Right lobe of liver (tissue), 6 donors: ENCODE measurements at regions of chr11 and their contacts with region 1.

Region 1: DNA sequence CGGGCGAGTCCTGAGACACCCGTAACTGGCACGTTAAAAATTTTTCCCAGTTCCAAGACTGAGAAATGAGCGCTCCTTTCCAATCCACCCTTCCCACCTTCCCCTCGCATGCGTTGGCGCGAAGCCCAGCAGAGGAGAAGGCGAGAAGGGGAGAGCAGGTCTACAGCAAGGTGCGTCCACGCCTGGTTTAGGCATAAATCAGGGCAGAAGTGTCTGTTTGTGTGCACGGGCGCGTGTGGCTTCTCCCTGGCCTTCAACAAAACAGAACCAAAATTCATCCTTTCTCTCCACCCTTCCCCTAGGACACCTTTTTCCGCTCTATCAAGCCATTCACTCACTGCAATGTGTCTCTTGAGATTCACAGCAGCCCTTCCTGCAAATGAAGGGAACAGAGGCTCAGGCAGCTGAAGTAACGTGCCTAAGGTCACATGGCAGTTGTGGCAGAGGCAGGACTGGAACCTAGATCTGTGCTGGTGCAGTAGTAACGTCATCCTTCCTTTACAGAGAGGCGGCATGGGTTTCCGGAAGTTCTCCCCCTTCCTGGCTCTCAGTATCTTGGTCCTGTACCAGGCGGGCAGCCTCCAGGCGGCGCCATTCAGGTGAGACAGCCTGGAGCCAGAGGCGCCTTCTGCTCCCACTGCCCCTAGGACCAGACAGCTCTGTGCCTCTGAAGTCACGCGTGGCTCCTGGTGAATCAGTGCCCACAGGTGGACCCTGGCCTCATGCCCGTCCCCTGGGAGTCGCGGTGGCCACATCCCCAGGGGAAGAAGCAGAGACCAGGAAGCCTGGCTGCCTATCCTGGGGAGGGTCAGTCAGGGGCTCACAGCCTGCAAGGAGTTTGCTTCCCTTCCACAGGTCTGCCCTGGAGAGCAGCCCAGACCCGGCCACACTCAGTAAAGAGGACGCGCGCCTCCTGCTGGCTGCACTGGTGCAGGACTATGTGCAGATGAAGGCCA is 1.1 kb downstream of the CALCB start:
- DNase-seq: peak; percentile 90
- ATAC-seq: peak; percentile 94 to 96 (median 96)
- H3K4me3 ChIP-seq: peak overlapping the region in 2 of 3 donors; percentile 9 to 38
- H3K27ac ChIP-seq: no peak overlapping the region
- H3K4me1 ChIP-seq: peaks cover 0 to 18% (median 6%) of the 10 kb centered on the region in 4 donors
- H3K27me3 ChIP-seq: peaks cover 0 to 6% of the 10 kb centered on the region in 2 donors
- CTCF ChIP-seq: peak; percentile 72 to 86 (median 77)
- POLR2A ChIP-seq: no peak

Region 2: GRCh38 chr11:14914541-14914940 is 159.9 kb before region 1 on chr11:
- intact Hi-C with region 1: loop called in 1 of 2 experiments (anchors 10 kb)
- DNase-seq: no peak
- ATAC-seq: no peak
- H3K4me3 ChIP-seq: no peak overlapping the region
- H3K27ac ChIP-seq: no peak overlapping the region
- H3K4me1 ChIP-seq: no peaks in the 10 kb centered on the region
- H3K27me3 ChIP-seq: no peaks in the 10 kb centered on the region
- CTCF ChIP-seq: no peak
- POLR2A ChIP-seq: no peak

Region 3: GRCh38 chr11:14974515-14975251 is 99.8 kb before region 1 on chr11:
- intact Hi-C with region 1: loop called in 1 of 2 experiments (anchors 10 kb)
- DNase-seq: peak; percentile 54 to 75 (median 65)
- ATAC-seq: peak; percentile 80 to 84 (median 84)
- H3K4me3 ChIP-seq: peak overlapping the region; percentile 3 to 32 (median 22)
- H3K27ac ChIP-seq: no peak overlapping the region
- H3K4me1 ChIP-seq: peaks cover 0 to 33% (median 16%) of the 10 kb centered on the region in 4 donors
- H3K27me3 ChIP-seq: peaks cover 4 to 29% of the 10 kb centered on the region in 2 donors
- CTCF ChIP-seq: peak; percentile 44 to 77 (median 65)
- POLR2A ChIP-seq: no peak

Region 4: DNA sequence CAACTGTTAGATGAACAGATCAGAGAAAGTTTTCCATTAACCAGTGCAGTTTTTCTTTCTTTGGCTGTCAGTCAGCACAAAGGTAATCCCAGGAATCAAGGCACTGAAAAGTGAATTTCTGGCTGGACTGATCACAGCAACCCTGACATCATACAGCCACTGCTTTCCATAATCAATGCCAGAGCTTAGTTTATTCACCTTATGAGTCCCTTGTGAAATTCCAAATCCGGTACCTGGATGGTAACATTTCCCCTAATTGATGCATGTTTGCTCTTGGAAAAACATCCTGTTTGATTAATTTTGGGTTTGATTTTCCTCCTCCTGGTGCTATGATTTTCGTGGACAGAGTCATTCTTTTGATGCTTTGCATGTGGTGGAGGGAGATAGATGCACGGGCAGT is 360.0 kb after region 1 on chr11:
- intact Hi-C with region 1: no loop called
- DNase-seq: peak in 1 of 3 donors; percentile 61
- ATAC-seq: peak; percentile 84 to 93 (median 86)
- H3K4me3 ChIP-seq: no peak overlapping the region
- H3K27ac ChIP-seq: peak overlapping the region in 2 of 3 donors; percentile 45 to 63
- H3K4me1 ChIP-seq: peaks cover 0 to 25% (median 11%) of the 10 kb centered on the region in 4 donors
- H3K27me3 ChIP-seq: no peaks in the 10 kb centered on the region
- CTCF ChIP-seq: no peak
- POLR2A ChIP-seq: peak; percentile 62